Naive thymus-derived CD4-positive, alpha-beta T cell (primary cell): ENCODE measurements at regions of chr1 and their contacts with region 1.

Region 1: DNA sequence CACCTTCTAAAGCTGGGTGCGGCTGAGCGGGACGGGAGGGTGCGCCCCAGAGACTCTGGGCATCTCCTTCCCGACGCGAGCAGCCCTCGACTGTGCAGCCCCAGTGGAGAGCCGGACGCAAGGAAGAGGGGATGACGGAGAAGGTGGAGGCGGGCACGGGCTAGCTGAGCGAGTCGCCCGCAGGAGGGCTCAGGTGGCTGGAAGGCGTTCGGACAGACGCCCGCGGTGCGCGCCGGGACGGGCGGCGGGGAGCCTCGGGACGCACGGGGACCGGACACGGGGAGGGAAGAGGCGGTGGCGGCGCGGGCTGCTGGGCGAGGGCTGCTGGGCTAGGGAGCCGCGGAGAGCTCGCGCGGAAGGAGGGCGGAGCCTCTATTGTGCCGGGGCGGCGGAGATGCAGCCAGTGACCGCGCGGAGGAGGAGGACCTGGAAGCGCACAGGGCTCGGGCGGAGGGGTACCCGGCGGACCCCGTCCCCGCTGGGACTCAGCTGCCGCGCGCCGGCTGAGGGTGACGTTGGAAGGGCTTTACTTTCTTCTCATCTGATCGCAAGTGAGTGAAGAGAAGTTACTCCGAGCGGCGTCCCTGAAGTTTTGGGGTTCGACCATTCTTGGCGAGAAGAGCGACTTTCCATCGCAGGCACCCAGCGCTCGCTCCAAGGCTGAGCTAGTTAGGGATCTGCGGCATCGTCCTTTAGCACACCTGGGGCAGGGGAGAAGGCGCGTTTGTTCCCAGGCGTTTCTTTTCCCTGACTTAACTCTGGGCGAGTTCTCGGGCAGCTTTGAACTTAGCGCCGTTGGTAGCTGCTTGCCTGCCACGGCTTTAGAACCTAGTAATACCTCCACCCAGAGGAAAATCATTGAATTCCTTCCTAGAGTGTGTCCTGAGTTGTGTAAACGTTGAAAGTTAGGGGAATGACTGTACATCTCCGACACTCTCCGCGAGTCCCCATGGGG is at the start of gene OLFML2B:
- DNase-seq: peak; percentile 15 to 66 (median 49)
- ATAC-seq: peak; percentile 88
- H3K4me3 ChIP-seq: peak within 1 kb of the TSS; percentile 80
- H3K4me3 Mint-ChIP-seq: peak within 1 kb of the TSS; percentile 89 to 99 (median 94)
- H3K27ac ChIP-seq: no peak within 1 kb of the TSS
- H3K27ac Mint-ChIP-seq: peak within 1 kb of the TSS in 3 of 9 donors; percentile 2 to 55 (median 51)
- H3K4me1 ChIP-seq: peaks cover 0 to 4% of the 10 kb centered on the region in 2 donors
- H3K4me1 Mint-ChIP-seq: peaks cover 6 to 13% (median 9%) of the 10 kb centered on the region in 7 donors
- H3K27me3 ChIP-seq: peaks cover 0 to 3% of the 10 kb centered on the region in 2 donors
- H3K27me3 Mint-ChIP-seq: peaks cover 33 to 54% (median 34%) of the 10 kb centered on the region in 5 donors
- total RNA-seq, gene OLFML2B: 0.27 to 0.47 (median 0.35) TPM in 3 of 5 experiments, not detected in the others

Region 2: DNA sequence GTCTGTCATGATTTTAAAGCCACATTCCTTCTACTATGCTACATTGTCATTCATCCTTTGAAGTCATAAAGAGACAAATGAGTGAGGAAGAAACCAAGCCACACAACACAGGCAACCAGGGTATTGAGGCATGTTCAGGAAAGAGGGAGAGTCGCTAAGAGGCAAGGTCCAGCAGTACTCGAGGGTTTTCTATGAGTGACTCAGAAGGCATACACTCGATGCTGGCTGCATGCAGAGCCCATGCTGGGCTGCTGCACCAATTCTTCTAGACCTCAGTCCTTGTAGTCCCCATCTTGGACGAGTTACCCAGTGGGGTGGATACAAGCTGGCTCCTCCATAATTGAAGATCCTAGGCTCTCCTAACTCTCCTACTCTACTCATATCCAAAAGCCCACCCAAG is 57.8 kb before region 1 on chr1:
- CTCF ChIA-PET with region 1: no interaction called
- POLR2A ChIA-PET with region 1: no interaction called
- intact Hi-C with region 1: no loop called
- DNase-seq: no peak
- ATAC-seq: no peak
- H3K4me3 ChIP-seq: no peak overlapping the region
- H3K4me3 Mint-ChIP-seq: no peak overlapping the region
- H3K27ac ChIP-seq: no peak overlapping the region
- H3K27ac Mint-ChIP-seq: peak overlapping the region in 1 of 9 donors; percentile 37
- H3K4me1 ChIP-seq: peaks cover 0 to 11% of the 10 kb centered on the region in 2 donors
- H3K4me1 Mint-ChIP-seq: peaks cover 9 to 43% (median 33%) of the 10 kb centered on the region in 7 donors
- H3K27me3 ChIP-seq: no peaks in the 10 kb centered on the region
- H3K27me3 Mint-ChIP-seq: no peaks in the 10 kb centered on the region

Region 3: GRCh38 chr1:162040681-162041080 is 16.9 kb after region 1 on chr1:
- CTCF ChIA-PET with region 1: interaction called, 14 read pairs
- POLR2A ChIA-PET with region 1: no interaction called
- intact Hi-C with region 1: loop called in 1 of 2 experiments (anchors 1 kb)
- DNase-seq: no peak
- ATAC-seq: no peak
- H3K4me3 ChIP-seq: no peak overlapping the region
- H3K4me3 Mint-ChIP-seq: no peak overlapping the region
- H3K27ac ChIP-seq: no peak overlapping the region
- H3K27ac Mint-ChIP-seq: peak overlapping the region in 1 of 9 donors; percentile 12
- H3K4me1 ChIP-seq: no peaks in the 10 kb centered on the region
- H3K4me1 Mint-ChIP-seq: peaks cover 0 to 4% (median 0%) of the 10 kb centered on the region in 7 donors
- H3K27me3 ChIP-seq: no peaks in the 10 kb centered on the region
- H3K27me3 Mint-ChIP-seq: peaks cover 5 to 20% (median 10%) of the 10 kb centered on the region in 5 donors